HEK293 (cell line): ENCODE measurements at regions of chr6 and their contacts with region 1.

Region 1: DNA sequence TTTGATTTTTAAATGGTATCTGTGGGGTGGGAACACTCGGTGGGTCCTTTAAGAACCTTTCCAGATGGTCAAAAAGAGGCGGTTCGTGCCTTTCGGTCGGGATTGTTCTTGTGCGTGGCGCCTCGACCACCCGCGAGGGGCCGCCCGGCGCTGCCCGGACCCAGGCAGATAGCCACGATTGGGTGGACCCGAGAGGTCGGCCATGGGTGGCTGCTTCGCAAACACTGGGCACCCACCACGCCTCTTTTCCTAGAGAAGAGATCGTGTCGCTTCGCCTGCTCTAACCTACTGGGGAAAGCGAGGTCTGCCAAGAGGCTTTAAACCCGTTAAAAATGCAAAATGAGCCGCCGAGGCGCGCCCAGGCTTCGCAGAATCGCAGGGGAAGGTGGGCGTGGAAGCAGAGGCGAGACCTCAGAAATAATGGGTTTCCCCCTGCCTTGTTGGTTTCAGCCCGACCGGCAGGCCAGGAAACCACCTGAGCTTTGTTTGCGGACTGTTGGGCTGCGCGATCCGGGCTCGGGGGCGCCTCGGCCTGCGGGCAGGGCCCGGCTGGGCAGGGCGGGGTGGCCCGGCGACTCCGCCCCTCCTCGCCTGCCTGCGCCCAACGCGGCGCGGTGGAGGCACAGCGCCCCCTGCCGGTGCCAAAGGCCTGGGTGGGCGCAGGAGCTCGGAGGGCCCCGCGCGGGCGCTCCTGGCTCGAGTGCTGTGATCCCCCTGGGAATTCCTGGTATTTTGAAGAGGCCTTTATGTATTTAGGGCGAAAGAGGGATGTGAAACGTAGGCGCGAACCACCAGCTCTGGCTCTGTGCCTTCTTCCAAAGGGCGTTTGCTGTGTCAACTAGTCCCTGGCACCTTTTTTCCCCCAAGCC is 1.6 kb downstream of the MARCKS start:
- H3K4me3 ChIP-seq: peak overlapping the region; percentile 76
- H3K27ac ChIP-seq: peak overlapping the region; percentile 99
- H3K4me1 ChIP-seq: no peaks in the 10 kb centered on the region
- CTCF ChIP-seq: peak; percentile 62

Region 2: GRCh38 chr6:113122060-113122459 is 736.7 kb before region 1 on chr6:
- CTCF ChIA-PET with region 1: interaction called, 17 read pairs
- POLR2A ChIA-PET with region 1: interaction called, 10 read pairs
- H3K4me3 ChIP-seq: no peak overlapping the region
- H3K27ac ChIP-seq: no peak overlapping the region
- H3K4me1 ChIP-seq: peaks cover 4% of the 10 kb centered on the region
- CTCF ChIP-seq: no peak

Region 3: DNA sequence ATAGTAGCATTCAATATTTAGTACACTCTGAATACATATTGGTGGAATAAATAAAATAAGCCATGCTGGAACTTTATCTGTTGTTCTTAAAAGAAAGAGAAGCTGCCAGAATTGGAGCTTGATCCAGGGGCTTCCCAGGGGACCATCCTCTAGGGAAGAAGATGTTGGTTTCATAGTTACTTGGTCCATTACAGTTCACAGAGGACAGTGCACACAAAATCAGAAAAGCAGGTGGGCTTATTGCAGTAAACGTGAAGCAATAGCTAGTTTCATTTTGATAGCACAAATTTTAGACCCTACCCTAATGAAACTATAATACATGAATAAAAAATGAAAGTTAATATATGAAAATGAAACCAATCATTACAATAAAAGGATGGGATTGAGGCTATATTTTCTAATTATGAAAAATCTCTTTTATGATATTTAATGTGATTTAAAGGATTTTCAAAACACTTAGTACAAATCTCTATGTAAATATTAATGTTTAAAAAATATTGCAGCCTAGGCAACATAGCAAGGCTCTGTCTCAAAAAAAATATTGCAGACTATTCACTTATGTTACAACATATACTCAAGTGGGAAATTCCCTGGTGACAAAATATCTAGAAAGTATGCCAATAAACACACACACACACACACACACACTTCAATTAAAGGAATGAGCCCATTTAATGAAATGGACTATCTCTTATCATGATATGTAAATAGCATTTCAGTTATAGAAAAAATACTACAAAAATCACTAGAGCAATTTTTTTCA is 228.6 kb before region 1 on chr6:
- CTCF ChIA-PET with region 1: interaction called, 11 read pairs
- POLR2A ChIA-PET with region 1: interaction called, 6 read pairs
- H3K4me3 ChIP-seq: no peak overlapping the region
- H3K27ac ChIP-seq: no peak overlapping the region
- H3K4me1 ChIP-seq: peaks cover 2% of the 10 kb centered on the region; the same call in 1 of the 2 replicates
- CTCF ChIP-seq: no peak

Region 4: DNA sequence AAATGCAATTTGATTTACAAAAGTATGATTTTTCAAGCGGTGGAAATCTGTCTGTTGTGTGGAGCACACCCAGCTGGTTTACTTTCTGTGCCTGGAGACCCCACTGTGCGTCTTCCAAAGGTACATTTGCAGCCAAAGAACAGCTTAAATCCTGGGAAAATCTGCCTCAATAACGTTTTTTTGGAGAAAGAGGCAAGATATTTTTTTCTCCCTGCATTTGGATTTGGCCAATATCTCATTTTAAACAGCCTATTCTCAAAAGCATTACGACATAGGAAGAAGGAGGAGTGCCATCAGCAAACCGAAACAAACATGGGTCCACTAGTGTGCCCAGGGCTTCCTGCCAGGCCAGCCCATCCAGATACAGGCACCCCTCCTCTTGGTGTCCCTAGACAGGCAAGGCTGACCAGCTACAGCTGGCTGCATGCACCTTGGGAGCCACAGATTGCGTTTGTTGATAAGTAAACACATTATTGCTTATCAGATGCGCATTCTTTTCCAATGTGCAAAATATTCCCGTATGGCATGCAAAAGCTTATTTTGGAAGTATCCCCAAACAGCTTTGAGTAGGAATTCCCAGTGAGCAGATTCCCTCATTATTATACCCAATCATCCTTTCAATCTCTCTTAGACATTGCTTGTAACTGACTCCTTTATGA is 186.1 kb before region 1 on chr6:
- CTCF ChIA-PET with region 1: interaction called, 13 read pairs
- POLR2A ChIA-PET with region 1: interaction called, 4 read pairs
- H3K4me3 ChIP-seq: no peak overlapping the region
- H3K27ac ChIP-seq: no peak overlapping the region
- H3K4me1 ChIP-seq: peaks cover 4% of the 10 kb centered on the region; the same call in 1 of the 2 replicates
- CTCF ChIP-seq: no peak

Region 5: GRCh38 chr6:113842153-113842552 is 16.6 kb before region 1 on chr6:
- CTCF ChIA-PET with region 1: interaction called, 5 read pairs
- POLR2A ChIA-PET with region 1: interaction called, 10 read pairs
- H3K4me3 ChIP-seq: no peak overlapping the region
- H3K27ac ChIP-seq: no peak overlapping the region
- H3K4me1 ChIP-seq: no peaks in the 10 kb centered on the region
- CTCF ChIP-seq: no peak